GM18951 (cell line): ENCODE measurements at regions of chr5 and their contacts with region 1.

Region 1: GRCh38 chr5:142748568-142749249 is 21.5 kb upstream of the ARHGAP26 start:
- POLR2A ChIP-seq: no peak

Region 2: DNA sequence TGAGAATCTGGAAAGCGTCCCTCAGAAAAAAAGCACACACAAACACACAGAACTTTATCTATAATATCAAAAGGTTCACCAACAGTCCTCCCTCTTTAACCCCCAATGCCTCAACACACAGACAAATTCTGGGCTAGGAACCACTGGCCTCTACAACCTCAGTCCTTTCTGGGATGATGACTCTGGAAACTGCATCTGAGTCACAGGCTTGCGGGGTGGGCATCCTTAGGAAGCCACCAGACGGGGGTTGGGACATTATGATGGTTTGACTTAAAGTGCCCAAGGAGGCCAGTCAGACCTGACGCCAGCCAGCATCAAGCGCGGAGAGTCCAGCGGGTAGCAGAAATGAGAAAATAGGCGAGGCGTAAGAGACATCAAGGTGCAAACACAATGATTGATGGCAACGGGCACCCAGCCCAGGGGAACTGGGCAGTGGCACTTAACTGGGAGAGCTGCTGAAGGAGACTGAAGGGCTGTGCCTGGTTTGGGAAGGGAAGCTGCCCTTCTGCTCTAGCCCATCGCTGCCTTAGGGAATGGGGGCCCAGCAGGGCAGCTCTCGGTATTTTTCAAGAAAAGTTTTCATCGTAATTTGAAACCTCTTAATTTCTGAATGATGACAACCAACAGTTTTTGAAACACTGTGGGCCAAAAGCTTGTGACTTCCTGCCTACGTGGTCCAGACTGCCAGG is 444.6 kb before region 1 on chr5:
- in situ Hi-C with region 1: no loop called
- POLR2A ChIP-seq: no peak

Region 3: DNA sequence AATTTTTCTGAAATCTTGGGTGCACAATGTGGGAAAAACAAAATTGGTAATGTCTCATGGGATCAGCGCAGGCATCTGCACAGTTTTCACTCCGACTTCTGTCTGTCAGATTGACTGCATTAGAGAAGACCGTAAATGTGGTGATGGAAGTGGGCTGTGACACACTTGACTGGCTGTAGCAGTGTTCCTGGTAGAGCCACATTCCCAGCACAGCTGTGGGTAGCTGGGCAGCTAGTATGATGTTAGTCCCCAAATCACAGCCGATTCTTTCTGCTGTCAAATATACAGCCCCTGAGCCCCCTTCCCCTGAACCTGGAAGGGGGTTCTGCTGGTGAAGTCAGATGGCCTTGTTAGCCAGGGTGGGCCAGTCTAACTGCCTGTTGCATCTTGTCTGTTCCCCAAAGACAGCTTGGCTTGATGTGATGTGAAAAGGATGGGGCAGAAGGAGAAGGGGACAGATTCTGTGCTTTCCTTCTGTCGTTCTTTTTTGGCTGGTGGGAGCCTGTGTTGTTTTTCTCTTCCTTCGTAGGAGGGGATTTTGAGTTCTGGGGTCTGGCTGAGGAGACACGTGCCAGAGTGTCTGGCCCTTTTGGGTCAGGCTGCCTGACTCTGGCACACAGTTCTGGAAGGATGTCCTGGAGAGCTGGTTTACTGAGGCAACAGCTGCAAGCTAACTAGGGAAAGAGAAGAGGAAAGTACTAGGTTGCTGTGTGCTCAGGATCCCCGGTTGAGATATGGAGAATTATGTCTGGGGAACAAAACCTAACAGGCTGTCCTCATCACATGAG is 357.5 kb before region 1 on chr5:
- in situ Hi-C with region 1: no loop called
- POLR2A ChIP-seq: no peak

Region 4: GRCh38 chr5:142878638-142879037 is 129.9 kb after region 1 on chr5:
- in situ Hi-C with region 1: loop called (anchors 5 kb)
- POLR2A ChIP-seq: no peak

Region 5: DNA sequence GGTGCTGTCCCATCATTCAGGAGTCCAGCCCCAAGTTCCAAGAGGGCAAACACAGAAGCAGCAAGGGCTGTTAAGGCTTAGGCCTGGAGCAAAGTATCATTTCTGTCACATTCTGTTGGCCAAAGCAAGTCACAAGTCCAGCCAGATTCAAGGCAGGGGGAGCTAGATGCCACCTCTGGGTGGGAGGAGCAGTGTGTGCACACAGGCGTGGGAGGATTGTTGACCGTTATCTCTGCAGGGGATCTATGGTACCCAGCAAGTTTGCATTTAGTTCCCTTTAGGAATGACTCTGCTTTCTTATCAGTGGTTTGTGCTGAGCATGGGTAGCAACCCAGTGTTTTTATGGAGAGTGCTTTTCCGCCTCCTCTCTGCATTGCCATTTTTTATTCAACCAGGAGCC is 375.9 kb after region 1 on chr5:
- in situ Hi-C with region 1: no loop called
- POLR2A ChIP-seq: no peak